ENCODE measurements at regions of chr16 and their contacts with region 1.

Region 1: GRCh38 chr16:70289229-70290098 is at the start of gene AARS1:
- DNase-seq: peak; percentile 100
- H3K4me3 ChIP-seq: peak within 1 kb of the TSS; percentile 89
- H3K27ac ChIP-seq: peak within 1 kb of the TSS; percentile 100
- H3K4me1 ChIP-seq: peaks cover 11% of the 10 kb centered on the region
- H3K27me3 ChIP-seq: no peaks in the 10 kb centered on the region
- CTCF ChIP-seq: no peak
- total RNA-seq, gene AARS1: 234 and 270 TPM in 2 replicates

Region 2: GRCh38 chr16:69865701-69866100 is 423.8 kb before region 1 on chr16:
- CTCF ChIA-PET with region 1: no interaction called
- POLR2A ChIA-PET with region 1: no interaction called
- intact Hi-C with region 1: no loop called
- DNase-seq: no peak
- H3K4me3 ChIP-seq: no peak overlapping the region
- H3K27ac ChIP-seq: no peak overlapping the region
- H3K4me1 ChIP-seq: no peaks in the 10 kb centered on the region
- H3K27me3 ChIP-seq: no peaks in the 10 kb centered on the region
- CTCF ChIP-seq: no peak

Region 3: GRCh38 chr16:70251629-70252354 is 37.7 kb before region 1 on chr16 and contains the start of gene EXOSC6:
- CTCF ChIA-PET with region 1: interaction called, 10 read pairs
- POLR2A ChIA-PET with region 1: no interaction called
- intact Hi-C with region 1: no loop called
- DNase-seq: peak; percentile 98
- H3K4me3 ChIP-seq: peak within 1 kb of the TSS; percentile 83
- H3K27ac ChIP-seq: peak within 1 kb of the TSS; percentile 88
- H3K4me1 ChIP-seq: peaks cover 8% of the 10 kb centered on the region
- H3K27me3 ChIP-seq: no peaks in the 10 kb centered on the region
- CTCF ChIP-seq: peak; percentile 97
- total RNA-seq, gene EXOSC6: 39.6 and 40.4 TPM in 2 replicates

Region 4: DNA sequence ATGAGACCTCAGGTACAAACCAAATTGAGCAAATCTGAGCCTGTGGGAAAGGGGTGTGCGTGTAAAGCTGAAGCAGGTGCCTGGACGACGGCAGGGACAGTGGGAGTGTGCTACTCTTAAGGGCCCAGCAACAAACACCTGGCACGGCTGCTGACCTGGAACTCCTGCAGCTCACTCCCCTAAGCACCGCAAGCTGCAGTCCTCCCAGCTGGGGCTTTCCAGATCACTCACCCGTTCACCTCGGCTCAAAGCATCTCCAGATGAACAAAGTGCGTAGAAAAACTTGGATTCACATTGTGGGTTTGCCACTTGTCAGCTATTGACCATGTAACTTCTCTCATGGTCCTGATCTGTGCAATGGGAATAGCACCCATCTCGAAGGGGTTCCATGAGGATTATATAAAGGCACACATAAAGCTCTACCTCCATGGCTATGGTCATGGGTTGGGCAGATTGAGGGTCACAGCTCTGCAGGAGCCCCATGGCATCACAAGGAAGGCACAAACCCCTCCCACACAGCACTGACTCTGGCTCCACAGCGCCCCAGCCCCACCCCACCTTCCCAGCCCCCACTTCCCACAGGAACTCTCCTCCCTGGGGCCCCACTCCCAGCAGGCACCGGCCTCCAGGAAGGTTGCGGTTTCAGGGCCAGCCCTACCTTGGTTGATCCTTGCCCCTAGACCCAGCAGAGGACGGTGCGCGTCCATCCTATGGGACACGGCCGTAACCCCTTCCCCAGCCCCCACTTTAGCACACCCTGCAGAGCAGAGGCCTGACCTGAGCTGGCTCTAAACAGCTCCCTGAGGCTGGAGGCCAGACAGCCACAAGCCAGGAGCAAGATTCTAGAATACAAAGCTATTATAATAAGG is 127.5 kb after region 1 on chr16:
- CTCF ChIA-PET with region 1: no interaction called
- POLR2A ChIA-PET with region 1: no interaction called
- intact Hi-C with region 1: no loop called
- DNase-seq: no peak
- H3K4me3 ChIP-seq: no peak overlapping the region
- H3K27ac ChIP-seq: no peak overlapping the region
- H3K4me1 ChIP-seq: no peaks in the 10 kb centered on the region
- H3K27me3 ChIP-seq: no peaks in the 10 kb centered on the region
- CTCF ChIP-seq: no peak

Region 5: DNA sequence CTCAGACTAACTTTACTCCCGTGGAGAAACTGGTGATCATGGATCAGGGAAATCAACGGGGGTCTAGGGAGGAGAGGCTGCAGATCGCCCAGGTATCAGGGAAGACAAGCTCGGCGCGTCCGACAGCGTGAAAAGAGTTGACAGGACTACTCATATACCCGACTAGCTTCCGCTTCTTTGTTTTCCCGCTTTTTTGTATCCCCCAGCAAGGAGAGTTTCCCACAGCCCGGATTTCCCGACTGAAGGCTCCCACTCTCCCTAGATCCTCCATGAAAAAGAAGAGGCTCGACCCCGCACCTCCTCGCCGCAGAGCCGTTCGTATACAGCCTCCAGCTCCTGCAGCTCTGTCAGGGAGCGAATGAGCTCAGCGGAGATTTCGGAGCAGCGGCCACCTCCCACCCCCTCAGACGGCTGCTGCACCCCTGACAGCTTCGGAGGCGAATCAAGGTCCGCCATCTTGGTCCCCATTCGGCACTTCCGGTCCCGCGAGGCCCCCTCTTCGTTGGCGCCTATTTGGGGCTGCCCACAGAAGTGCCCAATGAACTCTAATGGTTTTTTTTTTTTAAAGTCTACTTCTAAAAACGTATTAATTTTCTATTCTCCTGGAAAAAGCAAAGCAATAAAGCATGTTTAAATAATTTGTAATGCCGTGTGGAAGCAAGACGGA is 233.7 kb after region 1 on chr16 and contains the start of gene COG4:
- CTCF ChIA-PET with region 1: no interaction called
- POLR2A ChIA-PET with region 1: interaction called, 7 read pairs
- intact Hi-C with region 1: loop called (anchors 5 kb)
- DNase-seq: peak; percentile 92
- H3K4me3 ChIP-seq: peak within 1 kb of the TSS; percentile 67
- H3K27ac ChIP-seq: peak within 1 kb of the TSS; percentile 93
- H3K4me1 ChIP-seq: peaks cover 27% of the 10 kb centered on the region
- H3K27me3 ChIP-seq: no peaks in the 10 kb centered on the region
- CTCF ChIP-seq: no peak
- total RNA-seq, gene COG4: 68.6 and 82.4 TPM in 2 replicates

Region 6: GRCh38 chr16:70540994-70541393 is 251.5 kb after region 1 on chr16:
- CTCF ChIA-PET with region 1: no interaction called
- POLR2A ChIA-PET with region 1: no interaction called
- intact Hi-C with region 1: loop called (anchors 5 kb)
- DNase-seq: no peak
- H3K4me3 ChIP-seq: no peak overlapping the region
- H3K27ac ChIP-seq: no peak overlapping the region
- H3K4me1 ChIP-seq: no peaks in the 10 kb centered on the region
- H3K27me3 ChIP-seq: no peaks in the 10 kb centered on the region
- CTCF ChIP-seq: no peak

Measured in A673 (cell line).